Uterus (tissue), 4 donors: ENCODE measurements at regions of chr12 and their contacts with region 1.

Region 1: DNA sequence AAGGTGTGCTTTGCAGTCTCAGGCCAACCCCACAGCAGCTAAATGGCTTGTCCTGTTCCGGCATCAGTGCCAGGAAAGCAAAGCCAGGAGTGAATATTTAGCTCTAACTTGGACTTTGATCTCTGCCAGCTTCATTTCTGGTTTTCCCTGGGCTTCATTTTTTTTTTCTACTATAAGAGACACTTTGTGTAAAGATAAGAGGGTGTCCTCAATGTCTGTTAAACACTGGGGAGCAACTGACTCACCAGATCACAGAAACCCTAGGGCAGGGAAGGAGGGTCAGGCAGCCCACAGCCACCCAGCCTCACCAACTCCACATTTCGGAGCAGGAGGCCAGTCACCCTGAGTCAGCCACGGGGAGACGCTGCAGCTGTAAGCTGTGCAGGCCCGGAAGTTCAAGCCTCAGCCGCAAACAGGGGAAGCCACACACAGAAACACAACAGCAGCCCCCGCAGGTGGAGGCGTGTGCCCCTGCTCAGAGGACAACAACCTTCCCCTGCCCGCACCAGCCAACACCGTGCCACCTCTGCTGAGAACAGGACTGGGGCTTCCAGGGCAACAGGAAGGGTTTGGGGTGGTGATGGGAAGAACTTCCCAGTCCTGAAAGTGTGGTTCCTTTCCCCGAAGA is 6.3 kb downstream of the TNFRSF1A start:
- DNase-seq: peak; percentile 76 to 77
- H3K4me3 ChIP-seq: peak overlapping the region; percentile 43 to 60
- H3K27ac ChIP-seq: peak overlapping the region; percentile 95 to 97
- H3K4me1 ChIP-seq: peaks cover 4 to 31% of the 10 kb centered on the region in 2 donors
- H3K27me3 ChIP-seq: no peaks in the 10 kb centered on the region
- CTCF ChIP-seq: peak; percentile 35 to 69 (median 47)
- POLR2A ChIP-seq: peak in 1 of 2 donors; percentile 13

Region 2: DNA sequence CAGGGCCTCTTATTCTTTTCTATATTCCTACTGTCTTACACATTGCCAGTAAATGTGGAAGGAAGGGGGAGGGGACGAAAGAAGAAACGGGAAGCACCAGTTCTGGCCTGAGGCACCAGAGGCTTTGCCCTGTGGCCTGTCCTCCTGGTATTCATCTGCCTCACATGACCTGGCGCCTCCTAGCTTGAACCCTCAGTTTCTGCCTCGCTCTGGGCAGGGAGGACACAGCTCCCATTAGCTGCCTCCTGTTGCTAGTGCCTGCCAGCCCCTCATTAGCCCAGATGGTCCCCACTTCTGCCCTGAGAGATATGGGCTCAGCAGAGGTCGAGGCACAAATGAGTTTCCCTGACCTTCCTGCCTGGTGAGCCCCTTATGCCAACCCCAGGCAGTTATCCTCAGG is 28.0 kb before region 1 on chr12:
- intact Hi-C with region 1: no loop called
- DNase-seq: no peak
- H3K4me3 ChIP-seq: no peak overlapping the region
- H3K27ac ChIP-seq: no peak overlapping the region
- H3K4me1 ChIP-seq: peaks cover 0 to 9% of the 10 kb centered on the region in 2 donors
- H3K27me3 ChIP-seq: peaks cover 5 to 7% of the 10 kb centered on the region in 2 donors
- CTCF ChIP-seq: no peak
- POLR2A ChIP-seq: no peak

Region 3: DNA sequence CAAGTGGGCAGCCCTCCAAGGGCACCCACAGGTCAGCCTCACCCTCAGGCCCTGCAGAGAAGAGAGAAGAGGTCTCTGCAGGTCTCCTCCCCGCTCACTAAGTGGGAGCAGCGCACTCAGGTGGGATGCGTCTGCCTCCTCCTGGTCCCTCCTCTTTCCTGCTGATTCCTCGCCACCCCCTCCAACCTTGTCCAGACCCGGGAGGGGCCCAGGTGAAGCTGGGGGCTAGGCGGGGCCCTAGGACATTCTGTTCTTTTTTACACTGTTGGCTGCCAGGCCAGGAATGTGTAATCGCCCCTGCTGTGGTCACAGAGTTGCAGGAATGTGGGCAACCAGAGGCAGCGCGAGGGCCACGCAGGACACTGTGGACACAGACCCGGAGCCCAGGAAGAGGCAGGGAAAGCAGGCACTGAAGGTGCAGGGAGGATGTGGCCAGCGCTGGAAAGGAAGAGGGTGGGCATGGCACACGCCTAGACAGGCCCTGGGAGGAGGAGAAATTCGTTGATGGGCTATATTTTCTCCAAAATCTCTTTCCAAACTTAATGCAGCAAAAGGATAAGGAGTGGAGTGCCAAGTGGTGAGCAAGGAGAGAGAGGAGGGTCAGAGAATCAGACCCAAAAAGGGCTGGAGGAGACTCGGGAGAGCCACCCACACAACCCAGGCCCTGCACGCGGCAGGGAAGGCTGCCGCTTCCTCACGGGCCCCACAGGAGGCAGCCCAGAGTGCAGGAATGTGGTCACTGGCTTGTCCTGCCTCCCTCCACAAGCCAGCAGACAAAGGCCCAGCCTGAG is 40.7 kb after region 1 on chr12:
- intact Hi-C with region 1: loop called (anchors 5 kb)
- DNase-seq: peak; percentile 76 to 83
- H3K4me3 ChIP-seq: no peak overlapping the region
- H3K27ac ChIP-seq: peak overlapping the region; percentile 87 to 90
- H3K4me1 ChIP-seq: peaks cover 15 to 17% of the 10 kb centered on the region in 2 donors
- H3K27me3 ChIP-seq: no peaks in the 10 kb centered on the region
- CTCF ChIP-seq: peak in 3 of 4 experiments; percentile 27 to 59 (median 51)
- POLR2A ChIP-seq: peak in 1 of 2 donors; percentile 16

Region 4: GRCh38 chr12:6533923-6534694 is 198.5 kb after region 1 on chr12 and contains the start of gene GAPDH:
- intact Hi-C with region 1: loop called (anchors 10 kb)
- DNase-seq: peak; percentile 91
- H3K4me3 ChIP-seq: peak within 1 kb of the TSS; percentile 77 to 88
- H3K27ac ChIP-seq: peak within 1 kb of the TSS; percentile 90 to 94
- H3K4me1 ChIP-seq: peaks cover 0 to 19% of the 10 kb centered on the region in 2 donors
- H3K27me3 ChIP-seq: no peaks in the 10 kb centered on the region
- CTCF ChIP-seq: peak in 1 of 4 experiments; percentile 20
- POLR2A ChIP-seq: peak; percentile 35 to 90
- total RNA-seq, gene GAPDH: 962 to 1,122 (median 1,020) TPM